ENCODE measurements at regions of chr16 and their contacts with region 1.

Region 1: DNA sequence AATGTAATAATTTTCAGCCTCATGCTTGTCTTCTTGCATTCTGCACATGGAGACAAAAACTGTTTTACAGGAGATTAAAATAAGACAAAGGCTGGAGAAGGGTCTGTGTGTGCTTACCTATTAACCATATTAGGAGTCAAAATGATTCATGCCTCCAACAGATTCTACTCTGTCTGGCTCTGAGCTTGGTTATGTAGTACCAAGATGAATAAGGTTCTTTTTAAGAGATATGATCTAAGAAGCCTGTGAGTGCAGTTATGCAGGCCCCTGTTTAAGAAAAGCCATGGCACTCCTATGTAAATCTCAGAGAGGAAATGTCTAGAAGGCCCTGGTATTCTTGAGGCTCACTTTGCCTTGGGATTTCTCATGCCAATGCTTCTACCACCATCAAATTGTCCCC is 486.6 kb upstream of the CDH11 start:
- DNase-seq: no peak
- H3K4me3 ChIP-seq: no peak overlapping the region
- H3K27ac ChIP-seq: no peak overlapping the region
- H3K4me1 ChIP-seq: peaks cover 11% of the 10 kb centered on the region
- H3K27me3 ChIP-seq: no peaks in the 10 kb centered on the region
- CTCF ChIP-seq: no peak

Region 2: GRCh38 chr16:65500007-65500406 is 108.4 kb before region 1 on chr16:
- CTCF ChIA-PET with region 1: no interaction called
- dilution Hi-C with region 1: loop called (anchors 5 kb)
- in situ Hi-C with region 1: no loop called
- intact Hi-C with region 1: no loop called
- DNase-seq: peak; percentile 6
- H3K4me3 ChIP-seq: no peak overlapping the region
- H3K27ac ChIP-seq: no peak overlapping the region
- H3K4me1 ChIP-seq: peaks cover 7% of the 10 kb centered on the region
- H3K27me3 ChIP-seq: no peaks in the 10 kb centered on the region
- CTCF ChIP-seq: no peak

Measured in mammary epithelial cell (primary cell).